H1 (cell line): ENCODE measurements at regions of chr7 and their contacts with region 1.

Region 1: GRCh38 chr7:99558306-99559174 is at the start of gene ZNF655:
- DNase-seq: peak in 1 of 2 experiments; percentile 98
- H3K4me3 ChIP-seq: peak within 1 kb of the TSS; percentile 78 to 100 (median 96)
- H3K27ac ChIP-seq: peak within 1 kb of the TSS; percentile 98
- H3K4me1 ChIP-seq: peaks cover 0 to 7% (median 0%) of the 10 kb centered on the region in 4 experiments; a peak in 5 of 7 replicates
- H3K27me3 ChIP-seq: no peaks in the 10 kb centered on the region
- CTCF ChIP-seq: no peak
- EP300 ChIP-seq: no peak
- POLR2A ChIP-seq: peak; percentile 81 to 87
- RAD21 ChIP-seq: peak in 1 of 2 experiments; percentile 7; a peak in 1 of 4 replicates
- total RNA-seq, gene ZNF655: 36.7 and 37.8 TPM in 2 replicates

Region 2: DNA sequence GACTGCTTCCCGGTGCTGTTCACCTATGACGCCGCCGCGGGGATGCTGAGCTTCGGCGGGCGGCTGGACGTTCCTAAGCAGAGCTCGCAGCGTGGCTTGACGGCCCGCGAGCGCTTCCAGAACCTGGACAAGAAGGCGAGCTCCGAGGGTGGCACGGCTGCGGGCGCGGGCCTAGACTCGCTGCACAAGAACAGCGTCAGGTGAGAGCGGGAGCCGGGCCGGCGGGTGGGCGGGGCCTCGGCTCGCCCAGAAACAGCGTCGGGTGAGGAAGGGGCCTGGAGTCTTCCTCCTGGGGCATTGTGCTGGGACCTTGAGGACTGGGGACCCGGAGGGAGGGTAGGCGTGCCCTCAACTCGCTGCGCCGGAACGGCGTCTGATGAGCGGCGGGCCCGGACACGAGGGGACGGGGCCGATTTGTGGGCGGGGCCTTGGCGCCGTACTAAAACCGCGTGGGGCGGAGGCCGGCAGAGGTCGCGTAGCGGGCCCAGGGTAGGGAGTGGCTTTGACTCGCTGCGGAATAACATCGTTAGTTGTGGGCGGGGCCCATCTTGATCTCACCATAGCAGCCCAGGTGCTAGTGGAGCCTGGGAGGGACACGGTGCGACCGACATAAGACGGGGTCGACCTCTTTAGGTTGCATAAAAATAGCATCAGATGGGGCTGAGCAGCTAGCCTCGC is 165.7 kb before region 1 on chr7:
- CTCF ChIA-PET with region 1: no interaction called
- POLR2A ChIA-PET with region 1: no interaction called
- DNase-seq: peak; percentile 61 to 91
- H3K4me3 ChIP-seq: peak overlapping the region; percentile 31 to 70 (median 62)
- H3K27ac ChIP-seq: peak overlapping the region; percentile 78
- H3K4me1 ChIP-seq: peaks cover 2 to 12% (median 5%) of the 10 kb centered on the region in 4 experiments; a peak in 6 of 7 replicates
- H3K27me3 ChIP-seq: no peaks in the 10 kb centered on the region
- CTCF ChIP-seq: no peak
- EP300 ChIP-seq: no peak
- POLR2A ChIP-seq: peak in 1 of 2 experiments; percentile 84; a peak in 1 of 3 replicates
- RAD21 ChIP-seq: no peak

Region 3: GRCh38 chr7:99465421-99465768 is 93.1 kb before region 1 on chr7:
- CTCF ChIA-PET with region 1: no interaction called
- POLR2A ChIA-PET with region 1: interaction called, 12 read pairs
- DNase-seq: no peak
- H3K4me3 ChIP-seq: peak overlapping the region; percentile 92 to 99 (median 97)
- H3K27ac ChIP-seq: peak overlapping the region; percentile 98
- H3K4me1 ChIP-seq: peaks cover 0 to 2% (median 0%) of the 10 kb centered on the region in 4 experiments; a peak in 1 of 7 replicates
- H3K27me3 ChIP-seq: no peaks in the 10 kb centered on the region
- CTCF ChIP-seq: no peak
- EP300 ChIP-seq: no peak
- POLR2A ChIP-seq: no peak
- RAD21 ChIP-seq: no peak

Region 4: GRCh38 chr7:99525713-99526440 is 32.7 kb before region 1 on chr7:
- CTCF ChIA-PET with region 1: interaction called, 10 read pairs
- POLR2A ChIA-PET with region 1: interaction called, 6 read pairs
- DNase-seq: peak in 1 of 2 experiments; percentile 47
- H3K4me3 ChIP-seq: no peak overlapping the region
- H3K27ac ChIP-seq: no peak overlapping the region
- H3K4me1 ChIP-seq: no peaks in the 10 kb centered on the region
- H3K27me3 ChIP-seq: no peaks in the 10 kb centered on the region
- CTCF ChIP-seq: peak; percentile 37 to 49 (median 45)
- EP300 ChIP-seq: no peak
- POLR2A ChIP-seq: no peak
- RAD21 ChIP-seq: peak; percentile 71 to 78

Region 5: GRCh38 chr7:99579956-99580777 is 21.6 kb after region 1 on chr7:
- CTCF ChIA-PET with region 1: interaction called, 4 read pairs
- POLR2A ChIA-PET with region 1: interaction called, 56 read pairs
- DNase-seq: peak in 1 of 2 experiments; percentile 89
- H3K4me3 ChIP-seq: peak overlapping the region; percentile 55 to 67 (median 60)
- H3K27ac ChIP-seq: peak overlapping the region; percentile 20; the same call in 1 of the 2 replicates
- H3K4me1 ChIP-seq: peaks cover 0 to 6% (median 2%) of the 10 kb centered on the region in 4 experiments; a peak in 3 of 7 replicates
- H3K27me3 ChIP-seq: no peaks in the 10 kb centered on the region
- CTCF ChIP-seq: peak; percentile 59 to 67 (median 64)
- EP300 ChIP-seq: peak in 1 of 2 experiments; percentile 62; a peak in 1 of 3 replicates
- POLR2A ChIP-seq: peak in 1 of 2 experiments; percentile 63; a peak in 1 of 3 replicates
- RAD21 ChIP-seq: peak; percentile 47 to 62; a peak in 3 of 4 replicates

Region 6: GRCh38 chr7:99616359-99617191 is 58.0 kb after region 1 on chr7 and contains the start of gene ZSCAN25:
- CTCF ChIA-PET with region 1: interaction called, 13 read pairs
- POLR2A ChIA-PET with region 1: interaction called, 17 read pairs
- DNase-seq: peak; percentile 88 to 94
- H3K4me3 ChIP-seq: peak within 1 kb of the TSS; percentile 88 to 96 (median 94)
- H3K27ac ChIP-seq: peak within 1 kb of the TSS; percentile 96
- H3K4me1 ChIP-seq: no peaks in the 10 kb centered on the region; a peak in 2 of 7 replicates
- H3K27me3 ChIP-seq: no peaks in the 10 kb centered on the region
- CTCF ChIP-seq: peak; percentile 45 to 70 (median 62)
- EP300 ChIP-seq: peak in 1 of 2 experiments; percentile 15; a peak in 1 of 3 replicates
- POLR2A ChIP-seq: peak; percentile 75 to 96
- RAD21 ChIP-seq: peak; percentile 37 to 65
- total RNA-seq, gene ZSCAN25: 16.5 and 18.6 TPM in 2 replicates

Region 7: DNA sequence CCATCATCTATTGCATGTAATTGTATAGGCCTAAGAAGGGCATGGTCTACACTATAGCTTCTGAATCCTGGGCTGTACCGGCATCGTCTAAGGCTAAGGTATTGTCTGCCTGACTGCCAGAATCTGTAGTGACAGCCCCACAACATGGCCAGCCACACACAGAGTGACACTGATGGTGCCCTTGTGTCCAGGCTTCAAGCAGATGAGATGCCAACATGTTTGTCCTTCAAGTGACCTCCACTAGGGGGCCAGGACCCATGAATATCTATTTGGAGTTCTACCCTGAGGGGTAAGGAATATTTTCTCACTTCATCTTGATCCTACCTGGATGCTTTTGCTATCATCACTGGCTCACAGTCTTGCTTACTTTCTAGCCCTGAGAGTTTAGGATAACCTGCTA is 174.9 kb after region 1 on chr7:
- CTCF ChIA-PET with region 1: no interaction called
- POLR2A ChIA-PET with region 1: no interaction called
- DNase-seq: peak in 1 of 2 experiments; percentile 52
- H3K4me3 ChIP-seq: no peak overlapping the region
- H3K27ac ChIP-seq: no peak overlapping the region
- H3K4me1 ChIP-seq: peaks cover 0 to 2% (median 0%) of the 10 kb centered on the region in 4 experiments; a peak in 1 of 7 replicates
- H3K27me3 ChIP-seq: no peaks in the 10 kb centered on the region
- CTCF ChIP-seq: peak; percentile 20 to 64 (median 38)
- EP300 ChIP-seq: no peak
- POLR2A ChIP-seq: no peak
- RAD21 ChIP-seq: peak; percentile 28 to 52; a peak in 3 of 4 replicates